Heart left ventricle (tissue), 16 donors: ENCODE measurements at regions of chr17 and their contacts with region 1.

Region 1: DNA sequence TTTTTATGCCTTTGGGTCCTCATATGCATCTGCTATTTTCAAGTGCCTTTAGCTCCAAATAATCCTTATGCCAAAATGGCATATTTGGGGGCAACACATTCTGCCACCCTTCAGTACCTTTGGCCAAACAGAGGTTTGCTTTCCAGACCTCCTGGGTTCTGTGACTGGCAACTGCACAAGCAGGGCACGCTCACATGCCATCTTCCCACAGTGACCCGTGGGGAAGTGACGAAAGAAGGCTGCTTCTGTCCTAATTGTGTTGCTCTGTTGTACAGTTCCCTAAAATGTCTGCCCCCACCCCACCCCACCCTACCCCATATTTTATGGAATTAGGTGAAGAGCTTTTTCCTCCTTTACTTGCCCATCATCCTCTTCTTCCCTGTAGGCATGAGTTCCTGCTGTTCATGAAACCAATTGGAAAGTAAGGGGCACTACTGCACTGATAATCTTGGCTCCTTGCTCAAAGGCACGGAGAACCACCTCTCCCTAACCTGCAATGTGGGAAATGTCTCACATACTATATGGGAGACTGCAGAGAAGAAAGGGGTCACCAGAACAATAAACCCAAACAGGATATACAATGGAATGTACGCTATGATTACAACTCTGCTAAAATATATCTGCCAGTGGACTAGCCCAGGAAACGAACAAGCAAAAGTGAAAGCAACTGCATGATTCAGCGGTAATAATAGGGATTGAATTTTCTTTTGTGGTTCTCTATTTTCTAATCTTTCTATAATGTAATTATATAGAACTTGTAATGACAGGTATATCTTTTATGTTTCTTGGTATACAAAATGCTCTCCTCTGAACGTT is 3.3 kb upstream of the SLFN12L start:
- DNase-seq: peak; percentile 40 to 68 (median 56)
- ATAC-seq: peak; percentile 28 to 75 (median 60)
- H3K4me3 ChIP-seq: peak overlapping the region in 9 of 12 donors; percentile 32 to 57 (median 42)
- H3K27ac ChIP-seq: peak overlapping the region; percentile 50 to 93 (median 60)
- H3K4me1 ChIP-seq: peaks cover 0 to 54% (median 32%) of the 10 kb centered on the region in 12 donors
- H3K27me3 ChIP-seq: no peaks in the 10 kb centered on the region
- CTCF ChIP-seq: no peak
- POLR2A ChIP-seq: no peak

Region 2: DNA sequence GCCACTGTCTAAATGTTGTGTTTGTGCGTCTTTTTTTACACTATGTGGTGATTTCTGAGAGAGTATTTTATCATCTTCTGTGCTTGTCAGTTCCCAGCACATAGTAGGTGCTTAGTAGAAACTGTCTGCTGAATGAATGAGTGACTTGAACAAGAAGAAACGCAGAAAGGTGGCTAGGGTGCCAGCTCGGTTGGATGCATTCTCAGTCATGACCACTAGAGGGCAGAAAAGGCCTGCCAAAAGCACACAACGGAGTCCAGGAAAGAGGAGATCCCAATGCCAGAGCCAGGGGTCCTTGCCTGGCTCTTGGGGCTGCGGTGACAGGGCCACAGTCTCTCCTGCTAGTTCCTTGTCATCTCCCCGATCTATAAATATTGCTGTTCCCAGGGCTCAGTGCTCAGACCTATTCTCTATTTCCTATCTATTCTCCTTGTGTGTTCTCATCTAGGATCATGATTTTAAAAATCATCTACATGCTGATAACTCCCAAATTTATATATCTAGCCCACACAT is 1120.5 kb before region 1 on chr17:
- intact Hi-C with region 1: loop called in 1 of 10 experiments (anchors 5 kb)
- DNase-seq: peak in 4 of 5 donors; percentile 39 to 54 (median 48)
- ATAC-seq: peak; percentile 61 to 74 (median 68)
- H3K4me3 ChIP-seq: no peak overlapping the region
- H3K27ac ChIP-seq: no peak overlapping the region
- H3K4me1 ChIP-seq: peaks cover 0 to 6% (median 0%) of the 10 kb centered on the region in 12 donors
- H3K27me3 ChIP-seq: peaks cover 7 to 66% (median 38%) of the 10 kb centered on the region in 9 donors
- CTCF ChIP-seq: peak; percentile 91 to 98 (median 94)
- POLR2A ChIP-seq: no peak

Region 3: GRCh38 chr17:35141681-35142466 is 398.9 kb before region 1 on chr17 and contains the start of gene NLE1:
- intact Hi-C with region 1: loop called in 2 of 10 experiments (anchors 10 kb)
- DNase-seq: peak; percentile 81 to 91 (median 84)
- ATAC-seq: peak; percentile 74 to 93 (median 90)
- H3K4me3 ChIP-seq: peak within 1 kb of the TSS; percentile 40 to 88 (median 81)
- H3K27ac ChIP-seq: peak within 1 kb of the TSS in 3 of 12 donors; percentile 3 to 47 (median 29)
- H3K4me1 ChIP-seq: peaks cover 0 to 25% (median 15%) of the 10 kb centered on the region in 12 donors
- H3K27me3 ChIP-seq: no peaks in the 10 kb centered on the region
- CTCF ChIP-seq: peak in 11 of 12 donors; percentile 89 to 98 (median 94)
- POLR2A ChIP-seq: peak in 1 of 2 donors; percentile 34
- total RNA-seq, gene NLE1: 2.8 to 8.0 (median 4.2) TPM

Region 4: GRCh38 chr17:35242805-35243560 is 297.8 kb before region 1 on chr17 and contains the start of gene SLFN5:
- intact Hi-C with region 1: loop called in 3 of 10 experiments (anchors 5 to 10 kb)
- DNase-seq: peak; percentile 94 to 96 (median 94)
- ATAC-seq: peak; percentile 96 to 98 (median 97)
- H3K4me3 ChIP-seq: peak within 1 kb of the TSS; percentile 50 to 95 (median 74)
- H3K27ac ChIP-seq: peak within 1 kb of the TSS; percentile 84 to 97 (median 94)
- H3K4me1 ChIP-seq: peaks cover 0 to 51% (median 19%) of the 10 kb centered on the region in 12 donors
- H3K27me3 ChIP-seq: no peaks in the 10 kb centered on the region
- CTCF ChIP-seq: no peak
- POLR2A ChIP-seq: peak in 1 of 2 donors; percentile 93
- total RNA-seq, gene SLFN5: 12.4 to 41.4 (median 15.0) TPM

Region 5: GRCh38 chr17:35432176-35433074 is 108.4 kb before region 1 on chr17 and contains the start of gene SLFN12:
- intact Hi-C with region 1: loop called in 4 of 10 experiments (anchors 5 to 10 kb)
- DNase-seq: peak in 4 of 5 donors; percentile 61 to 74 (median 68)
- ATAC-seq: peak; percentile 70 to 93 (median 89)
- H3K4me3 ChIP-seq: peak within 1 kb of the TSS; percentile 49 to 81 (median 68)
- H3K27ac ChIP-seq: peak within 1 kb of the TSS; percentile 86 to 97 (median 93)
- H3K4me1 ChIP-seq: peaks cover 0 to 42% (median 19%) of the 10 kb centered on the region in 12 donors
- H3K27me3 ChIP-seq: no peaks in the 10 kb centered on the region
- CTCF ChIP-seq: no peak
- POLR2A ChIP-seq: peak in 1 of 2 donors; percentile 51
- total RNA-seq, gene SLFN12: 3.3 to 10.0 (median 4.5) TPM